Astrocyte of the cerebellum (primary cell): ENCODE measurements at regions of chr22 and their contacts with region 1.

Region 1: DNA sequence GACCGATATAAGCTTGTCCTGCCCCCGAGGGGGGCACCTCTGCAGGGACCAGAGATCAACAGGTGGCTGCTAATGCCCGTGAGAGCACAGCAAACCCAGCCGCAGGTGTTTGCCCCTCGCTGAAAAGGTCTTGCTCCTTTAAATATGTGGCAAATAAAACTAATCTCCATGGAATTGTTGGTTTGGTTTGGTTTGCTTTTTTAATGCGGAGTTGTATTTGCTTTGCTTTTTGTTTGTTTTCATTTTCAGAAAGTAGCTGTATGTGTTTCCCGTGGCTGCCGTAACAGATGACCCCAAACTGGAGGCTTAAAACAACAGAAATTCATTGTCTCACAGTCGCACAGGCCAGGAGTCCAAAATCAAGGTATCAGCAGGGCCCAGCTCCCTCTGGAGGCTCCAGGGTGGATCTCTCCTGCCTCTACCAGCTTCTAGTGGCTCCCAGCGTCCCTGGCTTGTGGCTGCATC is 93.0 kb downstream of the CELSR1 start:
- DNase-seq: no peak
- H3K4me3 ChIP-seq: no peak overlapping the region
- CTCF ChIP-seq: peak; percentile 30

Region 2: GRCh38 chr22:46377566-46378425 is 66.6 kb before region 1 on chr22:
- in situ Hi-C with region 1: no loop called
- DNase-seq: no peak
- H3K4me3 ChIP-seq: no peak overlapping the region
- CTCF ChIP-seq: no peak

Region 3: GRCh38 chr22:46476547-46476941 is 32.1 kb after region 1 on chr22:
- in situ Hi-C with region 1: loop called (anchors 5 kb)
- DNase-seq: no peak
- H3K4me3 ChIP-seq: no peak overlapping the region
- CTCF ChIP-seq: no peak